ENCODE measurements at regions of chr11 and their contacts with region 1.

Region 1: DNA sequence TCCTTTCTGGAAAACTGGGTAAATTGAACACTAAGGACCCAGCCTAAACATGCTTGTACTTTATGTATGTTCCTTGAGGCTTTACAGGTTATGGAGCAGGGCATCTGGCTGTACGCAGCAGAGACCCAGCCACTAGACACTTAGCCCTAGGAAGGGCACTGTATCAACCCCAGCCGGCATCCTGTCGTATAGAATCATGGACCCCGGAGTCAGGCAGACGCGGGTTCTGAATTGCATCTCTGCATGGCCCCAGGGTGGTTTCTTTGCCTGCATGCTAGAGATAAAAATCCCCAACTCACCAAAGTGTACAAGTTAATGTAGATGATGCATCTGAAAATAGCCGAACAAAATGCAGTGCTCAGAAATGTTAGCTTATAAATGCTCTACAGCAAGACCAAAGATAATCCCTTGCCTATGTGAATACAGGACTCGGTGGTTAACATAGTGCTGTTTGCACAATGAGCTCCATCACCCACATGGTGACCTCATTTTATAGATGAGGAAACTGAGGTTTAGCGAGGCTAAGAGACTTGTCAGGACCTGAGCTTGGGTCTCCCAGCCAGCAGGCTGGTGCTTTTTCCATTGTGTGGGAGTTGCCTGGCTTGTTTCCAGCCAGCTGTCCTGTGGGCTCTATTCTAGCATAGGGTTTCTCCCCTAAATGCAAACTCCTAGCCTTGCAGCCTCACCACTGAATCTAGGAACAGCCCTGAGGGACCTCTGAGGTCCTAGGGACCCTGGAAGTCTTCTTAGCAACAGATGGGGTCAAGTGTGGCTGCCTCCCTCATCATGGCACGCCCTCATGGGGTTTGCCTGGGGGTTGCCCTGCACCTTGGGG is 7.3 kb downstream of the CD6 start:
- DNase-seq: peak; percentile 92
- H3K4me3 Mint-ChIP-seq: peak overlapping the region; percentile 95
- H3K27ac Mint-ChIP-seq: peak overlapping the region; percentile 99
- H3K4me1 Mint-ChIP-seq: peaks cover 71% of the 10 kb centered on the region
- H3K27me3 Mint-ChIP-seq: no peaks in the 10 kb centered on the region

Region 2: GRCh38 chr11:60913793-60914632 is 64.8 kb before region 1 on chr11 and contains the start of gene TMEM109:
- CTCF ChIA-PET with region 1: interaction called, 3 read pairs
- POLR2A ChIA-PET with region 1: no interaction called
- intact Hi-C with region 1: loop called (anchors 2 kb)
- DNase-seq: peak; percentile 92
- H3K4me3 Mint-ChIP-seq: peak within 1 kb of the TSS; percentile 92
- H3K27ac Mint-ChIP-seq: peak within 1 kb of the TSS; percentile 91
- H3K4me1 Mint-ChIP-seq: peaks cover 56% of the 10 kb centered on the region
- H3K27me3 Mint-ChIP-seq: no peaks in the 10 kb centered on the region
- total RNA-seq, gene TMEM109: 101 to 106 TPM

Region 3: GRCh38 chr11:60992842-60993409 is 14.2 kb after region 1 on chr11:
- CTCF ChIA-PET with region 1: interaction called, 6 read pairs
- POLR2A ChIA-PET with region 1: interaction called, 46 read pairs
- intact Hi-C with region 1: loop called (anchors 1 kb)
- DNase-seq: peak; percentile 19
- H3K4me3 Mint-ChIP-seq: peak overlapping the region; percentile 68
- H3K27ac Mint-ChIP-seq: peak overlapping the region; percentile 97
- H3K4me1 Mint-ChIP-seq: peaks cover 81% of the 10 kb centered on the region
- H3K27me3 Mint-ChIP-seq: no peaks in the 10 kb centered on the region

Region 4: DNA sequence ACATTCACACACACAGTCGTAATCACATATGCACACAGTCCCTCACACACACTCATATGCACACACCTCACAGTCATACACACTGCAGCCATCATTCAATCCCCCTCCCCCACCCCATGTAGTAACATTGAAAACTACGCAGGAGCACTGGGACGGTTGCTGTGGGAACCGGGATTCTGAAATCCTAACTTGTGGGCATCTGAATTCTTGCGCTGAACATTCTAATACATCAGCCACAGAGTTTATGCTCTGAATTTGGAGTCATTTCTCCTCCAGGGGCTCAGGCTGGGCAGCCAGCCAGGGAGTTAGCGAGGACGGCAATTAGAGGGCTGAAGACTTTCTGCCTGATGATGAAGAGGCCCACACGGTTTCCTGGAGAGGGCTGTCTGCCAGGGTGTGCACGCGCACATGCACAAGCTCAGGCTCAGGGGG is 25.4 kb after region 1 on chr11:
- CTCF ChIA-PET with region 1: interaction called, 3 read pairs
- POLR2A ChIA-PET with region 1: interaction called, 13 read pairs
- intact Hi-C with region 1: no loop called
- DNase-seq: peak; percentile 75
- H3K4me3 Mint-ChIP-seq: peak overlapping the region; percentile 75
- H3K27ac Mint-ChIP-seq: peak overlapping the region; percentile 97
- H3K4me1 Mint-ChIP-seq: peaks cover 82% of the 10 kb centered on the region
- H3K27me3 Mint-ChIP-seq: no peaks in the 10 kb centered on the region

Region 5: DNA sequence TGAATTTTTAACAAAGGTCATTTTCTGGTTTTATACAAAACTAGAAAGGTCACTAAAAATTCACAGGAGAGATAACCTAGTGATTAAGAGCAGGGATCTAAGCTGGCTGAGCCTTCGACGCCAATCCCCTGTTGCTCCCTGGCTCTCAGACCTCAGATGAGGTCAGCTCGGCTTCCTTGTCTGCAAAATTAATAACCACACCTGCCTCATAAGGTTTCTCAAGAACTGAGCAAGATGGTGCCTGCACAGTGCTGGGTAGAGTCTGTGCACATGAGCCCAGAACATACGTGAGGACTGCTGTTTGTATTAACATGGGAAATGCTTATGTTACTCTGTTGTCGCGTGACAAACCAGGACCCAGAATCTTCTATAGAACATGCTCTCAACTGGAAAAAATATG is 99.2 kb after region 1 on chr11:
- CTCF ChIA-PET with region 1: interaction called, 4 read pairs
- POLR2A ChIA-PET with region 1: interaction called, 16 read pairs
- intact Hi-C with region 1: no loop called
- DNase-seq: peak; percentile 56
- H3K4me3 Mint-ChIP-seq: peak overlapping the region; percentile 85
- H3K27ac Mint-ChIP-seq: peak overlapping the region; percentile 92
- H3K4me1 Mint-ChIP-seq: peaks cover 83% of the 10 kb centered on the region
- H3K27me3 Mint-ChIP-seq: no peaks in the 10 kb centered on the region

Region 6: DNA sequence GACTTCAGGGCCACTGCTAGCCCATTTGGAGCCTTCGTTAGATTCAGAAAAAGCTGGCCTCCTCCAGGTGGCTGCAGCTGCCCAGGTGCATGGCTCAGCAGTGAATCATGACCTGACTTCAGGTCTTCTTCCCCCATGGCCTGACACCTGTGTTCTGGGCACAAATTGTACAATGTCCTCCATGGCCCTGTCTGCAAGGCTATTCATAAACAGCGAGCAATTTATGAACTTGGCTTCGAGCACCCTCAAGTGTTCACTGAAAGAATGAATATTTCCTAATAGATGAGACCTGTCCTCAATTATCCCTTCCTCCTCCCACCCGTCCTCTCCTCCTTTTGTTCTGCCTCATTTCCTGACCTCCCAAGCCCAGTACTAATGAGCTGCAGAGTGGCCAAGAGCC is 194.7 kb after region 1 on chr11:
- CTCF ChIA-PET with region 1: no interaction called
- POLR2A ChIA-PET with region 1: no interaction called
- intact Hi-C with region 1: no loop called
- DNase-seq: no peak
- H3K4me3 Mint-ChIP-seq: no peak overlapping the region
- H3K27ac Mint-ChIP-seq: no peak overlapping the region
- H3K4me1 Mint-ChIP-seq: peaks cover 11% of the 10 kb centered on the region
- H3K27me3 Mint-ChIP-seq: peaks cover 2% of the 10 kb centered on the region